ENCODE measurements at regions of chr2 and their contacts with region 1.

Region 1: GRCh38 chr2:233418761-233419625 is 64.7 kb downstream of the DGKD start:
- DNase-seq: peak; percentile 85
- H3K4me3 ChIP-seq: peak overlapping the region; percentile 61
- H3K27ac ChIP-seq: peak overlapping the region; percentile 69
- H3K4me1 ChIP-seq: peaks cover 72% of the 10 kb centered on the region
- CTCF ChIP-seq: no peak

Region 2: GRCh38 chr2:233404222-233404621 is 14.8 kb before region 1 on chr2:
- CTCF ChIA-PET with region 1: interaction called, 4 read pairs
- POLR2A ChIA-PET with region 1: interaction called, 5 read pairs
- intact Hi-C with region 1: loop called (anchors 1 kb)
- DNase-seq: peak; percentile 73
- H3K4me3 ChIP-seq: no peak overlapping the region
- H3K27ac ChIP-seq: no peak overlapping the region
- H3K4me1 ChIP-seq: peaks cover 3% of the 10 kb centered on the region
- CTCF ChIP-seq: peak; percentile 97